Endothelial cell of umbilical vein (primary cell): ENCODE measurements at regions of chr7 and their contacts with region 1.

Region 1: GRCh38 chr7:22577396-22578001 is 77.5 kb upstream of the STEAP1B start:
- DNase-seq: peak; percentile 94
- H3K4me3 ChIP-seq: peak overlapping the region in 1 of 3 experiments; percentile 34
- H3K27ac ChIP-seq: peak overlapping the region; percentile 99
- H3K4me1 ChIP-seq: peaks cover 47% of the 10 kb centered on the region
- H3K27me3 ChIP-seq: no peaks in the 10 kb centered on the region
- CTCF ChIP-seq: no peak
- POLR2A ChIP-seq: peak; percentile 20

Region 2: DNA sequence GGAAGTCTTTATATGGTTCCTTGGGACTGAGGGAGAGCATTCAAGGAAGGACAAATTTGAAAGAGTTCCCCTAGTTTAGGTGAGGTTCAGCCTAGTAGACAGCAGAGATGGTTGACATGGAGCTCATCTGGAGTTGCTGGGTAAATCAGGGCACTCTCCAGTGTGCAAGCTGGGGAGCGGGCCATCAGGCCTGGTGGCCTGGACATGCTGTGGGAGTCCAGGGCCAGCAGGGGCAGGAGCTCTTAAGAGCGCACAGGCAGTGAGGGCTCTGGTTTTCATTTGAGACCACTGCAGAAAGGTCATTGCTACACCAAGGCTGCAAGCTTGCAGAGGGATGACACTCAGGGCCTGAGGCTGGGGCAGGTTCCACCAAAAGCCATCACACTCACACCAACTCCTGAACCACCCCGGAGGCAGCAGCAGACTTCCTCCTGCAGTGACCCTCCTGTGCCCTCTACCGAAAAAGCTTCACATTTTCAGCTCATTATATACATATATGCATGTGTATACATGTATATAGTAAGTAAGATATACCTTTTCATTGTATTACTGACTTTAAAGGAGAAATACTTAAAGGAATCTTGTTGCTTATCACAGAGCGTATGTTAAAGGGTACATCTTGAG is 117.0 kb before region 1 on chr7:
- CTCF ChIA-PET with region 1: no interaction called
- POLR2A ChIA-PET with region 1: no interaction called
- dilution Hi-C with region 1: no loop called
- intact Hi-C with region 1: no loop called
- DNase-seq: no peak
- H3K4me3 ChIP-seq: no peak overlapping the region
- H3K27ac ChIP-seq: no peak overlapping the region
- H3K4me1 ChIP-seq: no peaks in the 10 kb centered on the region
- H3K27me3 ChIP-seq: no peaks in the 10 kb centered on the region
- CTCF ChIP-seq: no peak
- POLR2A ChIP-seq: no peak

Region 3: DNA sequence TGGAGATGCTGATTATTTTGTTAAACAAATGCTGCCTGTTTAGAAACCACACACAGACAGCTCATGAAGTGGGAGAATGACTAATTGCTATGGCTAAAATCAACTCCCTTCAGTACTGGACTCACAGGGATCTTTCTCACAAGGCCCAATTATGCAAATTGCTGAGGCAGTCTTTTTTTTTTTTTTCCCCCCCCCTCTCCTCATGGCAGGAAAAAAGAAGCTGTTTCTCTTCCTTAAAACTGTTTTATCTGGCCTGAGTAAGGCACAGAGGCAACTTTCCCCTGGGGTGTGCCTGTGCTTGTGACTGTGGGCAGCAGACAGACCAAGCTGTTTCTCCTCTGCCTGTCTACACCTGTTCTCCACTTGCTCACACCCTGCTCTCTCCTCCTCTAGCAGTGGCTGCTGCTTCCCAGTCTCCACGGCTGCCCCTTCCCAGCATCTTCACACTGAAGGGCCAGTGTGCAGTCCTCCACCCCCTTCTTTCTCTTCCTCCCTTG is 12.1 kb before region 1 on chr7:
- CTCF ChIA-PET with region 1: interaction called, 67 read pairs
- POLR2A ChIA-PET with region 1: interaction called, 13 read pairs
- dilution Hi-C with region 1: no loop called
- intact Hi-C with region 1: loop called (anchors 1 kb)
- DNase-seq: peak; percentile 69
- H3K4me3 ChIP-seq: peak overlapping the region in 1 of 3 experiments; percentile 70
- H3K27ac ChIP-seq: peak overlapping the region; percentile 99
- H3K4me1 ChIP-seq: peaks cover 72% of the 10 kb centered on the region
- H3K27me3 ChIP-seq: no peaks in the 10 kb centered on the region
- CTCF ChIP-seq: no peak
- POLR2A ChIP-seq: peak; percentile 41

Region 4: DNA sequence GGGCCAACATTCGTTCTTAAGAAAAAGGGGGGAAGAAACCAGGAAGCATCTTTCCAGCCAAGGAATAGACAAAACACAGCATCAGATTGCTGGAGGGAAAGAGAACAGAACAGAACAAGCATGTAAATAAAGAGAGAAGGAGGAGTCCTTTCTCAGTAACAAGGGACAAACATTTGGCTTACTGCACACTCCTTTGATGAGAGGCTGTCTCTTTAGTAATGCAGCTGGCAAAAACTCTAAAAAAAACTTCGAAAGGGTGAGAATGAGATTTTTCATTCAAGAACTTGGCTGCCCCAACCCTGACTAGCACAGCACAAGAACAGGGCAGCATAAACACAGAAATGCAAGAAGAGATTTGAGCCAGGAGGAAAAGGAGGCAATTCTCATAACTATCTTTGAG is 110.6 kb after region 1 on chr7:
- CTCF ChIA-PET with region 1: no interaction called
- POLR2A ChIA-PET with region 1: no interaction called
- dilution Hi-C with region 1: no loop called
- intact Hi-C with region 1: no loop called
- DNase-seq: no peak
- H3K4me3 ChIP-seq: no peak overlapping the region
- H3K27ac ChIP-seq: no peak overlapping the region
- H3K4me1 ChIP-seq: no peaks in the 10 kb centered on the region
- H3K27me3 ChIP-seq: no peaks in the 10 kb centered on the region
- CTCF ChIP-seq: no peak
- POLR2A ChIP-seq: no peak

Region 5: DNA sequence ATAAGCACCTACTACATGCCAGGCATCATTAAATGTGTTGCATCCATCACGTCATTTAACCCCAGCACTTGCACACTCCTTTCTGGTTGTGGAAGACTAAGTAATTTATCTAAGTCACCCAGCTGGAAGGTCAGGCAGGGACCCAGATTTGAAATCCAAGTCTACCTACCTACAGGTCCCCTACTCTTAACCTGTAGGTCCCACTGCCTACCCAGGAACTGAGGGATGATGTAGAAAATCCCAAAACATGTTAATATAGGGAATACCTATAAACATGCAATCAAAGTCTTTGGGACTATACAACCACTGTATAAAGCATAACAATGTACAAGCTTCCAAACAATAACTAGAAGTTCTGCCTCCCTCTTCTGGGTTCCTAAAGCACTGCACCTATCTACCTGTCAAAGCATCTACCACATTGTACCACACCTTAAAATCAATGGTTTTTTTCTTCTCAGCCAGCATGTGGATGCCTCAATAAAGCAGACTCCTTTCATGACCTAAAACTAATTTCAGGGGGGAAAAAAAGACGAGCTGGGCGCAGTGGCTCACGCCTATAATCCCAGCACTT is 155.1 kb after region 1 on chr7:
- CTCF ChIA-PET with region 1: interaction called, 88 read pairs
- POLR2A ChIA-PET with region 1: interaction called, 20 read pairs
- dilution Hi-C with region 1: loop called (anchors 25 kb)
- intact Hi-C with region 1: loop called (anchors 1 kb)
- DNase-seq: peak; percentile 45
- H3K4me3 ChIP-seq: no peak overlapping the region
- H3K27ac ChIP-seq: no peak overlapping the region
- H3K4me1 ChIP-seq: peaks cover 25% of the 10 kb centered on the region
- H3K27me3 ChIP-seq: no peaks in the 10 kb centered on the region
- CTCF ChIP-seq: peak; percentile 24 to 42
- POLR2A ChIP-seq: peak; percentile 38